ENCODE measurements at regions of chr1 and their contacts with region 1.

Region 1: GRCh38 chr1:8727809-8728213 is 89.6 kb downstream of the RERE start:
- DNase-seq: no peak
- H3K4me3 ChIP-seq: no peak overlapping the region
- H3K27ac ChIP-seq: no peak overlapping the region
- H3K4me1 ChIP-seq: no peaks in the 10 kb centered on the region
- H3K27me3 ChIP-seq: no peaks in the 10 kb centered on the region
- CTCF ChIP-seq: no peak
- POLR2A ChIP-seq: no peak

Region 2: DNA sequence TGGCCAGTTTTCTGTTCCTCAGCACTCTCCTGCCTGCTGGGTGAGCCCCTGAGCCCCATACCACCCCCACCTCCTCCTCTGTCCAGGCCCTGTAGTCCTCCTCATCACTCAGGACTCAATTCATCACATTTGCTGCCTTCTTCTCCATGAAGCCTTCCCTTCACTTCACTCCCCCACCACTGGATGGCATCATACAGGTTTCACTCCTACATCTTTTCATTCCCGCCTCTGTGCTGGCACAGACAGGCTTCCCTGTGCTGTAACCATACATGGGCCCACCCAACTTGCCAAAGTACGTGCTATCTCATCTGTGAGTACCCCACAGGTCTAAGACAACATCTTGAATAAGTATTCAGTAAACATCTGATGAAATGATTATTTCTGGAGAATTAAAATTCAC is 353.0 kb before region 1 on chr1:
- CTCF ChIA-PET with region 1: interaction called, 9 read pairs
- POLR2A ChIA-PET with region 1: no interaction called
- dilution Hi-C with region 1: no loop called
- intact Hi-C with region 1: loop called (anchors 2 kb)
- DNase-seq: peak; percentile 55
- H3K4me3 ChIP-seq: no peak overlapping the region
- H3K27ac ChIP-seq: no peak overlapping the region
- H3K4me1 ChIP-seq: peaks cover 24% of the 10 kb centered on the region
- H3K27me3 ChIP-seq: no peaks in the 10 kb centered on the region
- CTCF ChIP-seq: peak; percentile 28 to 47
- POLR2A ChIP-seq: no peak

Region 3: GRCh38 chr1:8560611-8561544 is 166.9 kb before region 1 on chr1:
- CTCF ChIA-PET with region 1: interaction called, 78 read pairs
- POLR2A ChIA-PET with region 1: no interaction called
- dilution Hi-C with region 1: no loop called
- intact Hi-C with region 1: loop called (anchors 1 kb)
- DNase-seq: peak; percentile 64
- H3K4me3 ChIP-seq: no peak overlapping the region
- H3K27ac ChIP-seq: no peak overlapping the region
- H3K4me1 ChIP-seq: peaks cover 2% of the 10 kb centered on the region
- H3K27me3 ChIP-seq: no peaks in the 10 kb centered on the region
- CTCF ChIP-seq: peak; percentile 58 to 66
- POLR2A ChIP-seq: no peak

Region 4: GRCh38 chr1:8687039-8687438 is 40.8 kb before region 1 on chr1:
- CTCF ChIA-PET with region 1: interaction called, 7 read pairs
- POLR2A ChIA-PET with region 1: no interaction called
- dilution Hi-C with region 1: no loop called
- intact Hi-C with region 1: loop called (anchors 1 kb)
- DNase-seq: peak; percentile 95
- H3K4me3 ChIP-seq: no peak overlapping the region
- H3K27ac ChIP-seq: peak overlapping the region; percentile 74
- H3K4me1 ChIP-seq: peaks cover 19% of the 10 kb centered on the region
- H3K27me3 ChIP-seq: no peaks in the 10 kb centered on the region
- CTCF ChIP-seq: no peak
- POLR2A ChIP-seq: no peak

Region 5: GRCh38 chr1:8702850-8703810 is 24.7 kb before region 1 on chr1:
- CTCF ChIA-PET with region 1: interaction called, 39 read pairs
- POLR2A ChIA-PET with region 1: no interaction called
- dilution Hi-C with region 1: no loop called
- intact Hi-C with region 1: loop called (anchors 1 kb)
- DNase-seq: peak; percentile 96
- H3K4me3 ChIP-seq: peak overlapping the region; percentile 61 to 94 (median 80)
- H3K27ac ChIP-seq: peak overlapping the region; percentile 77
- H3K4me1 ChIP-seq: peaks cover 17% of the 10 kb centered on the region
- H3K27me3 ChIP-seq: no peaks in the 10 kb centered on the region
- CTCF ChIP-seq: peak in 1 of 2 donors; percentile 20
- POLR2A ChIP-seq: peak; percentile 95

Region 6: DNA sequence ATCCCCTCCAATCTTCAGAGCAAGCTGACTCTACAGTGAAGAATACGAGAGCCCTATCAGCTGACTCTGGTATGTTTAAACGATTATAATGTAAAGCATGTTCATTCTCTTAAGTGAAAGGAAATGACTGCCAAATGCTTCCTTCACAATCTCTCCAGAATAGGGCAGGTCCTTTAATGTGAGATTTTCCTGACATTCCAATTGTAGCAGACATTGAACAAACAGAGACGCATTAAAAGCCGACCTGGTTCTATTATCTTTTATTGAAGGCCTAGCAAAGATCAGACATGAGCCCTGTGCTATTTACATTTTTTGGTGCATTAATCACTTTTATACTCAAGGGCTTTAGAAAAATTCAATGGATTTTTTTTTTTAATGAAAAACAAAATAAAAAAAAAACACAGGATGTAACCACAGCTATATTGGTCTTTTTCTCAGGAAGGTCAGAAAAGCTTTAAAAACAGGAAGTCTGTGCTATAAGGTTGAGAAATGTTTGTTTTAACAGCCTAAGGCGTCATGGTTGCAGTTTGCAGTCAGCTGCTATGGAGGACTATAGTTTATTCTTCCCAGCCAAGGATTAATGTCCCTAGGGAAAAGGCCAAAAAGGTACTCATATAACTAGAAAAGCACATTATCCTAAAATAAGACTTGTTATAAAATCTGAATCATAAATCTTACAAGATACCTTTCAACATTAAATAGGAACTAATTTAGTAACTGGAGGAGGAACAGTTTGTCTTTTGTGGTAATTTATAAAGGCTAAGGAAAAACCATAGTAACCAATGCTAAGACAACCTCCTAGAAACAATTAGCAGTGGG is 15.2 kb before region 1 on chr1:
- CTCF ChIA-PET with region 1: interaction called, 12 read pairs
- POLR2A ChIA-PET with region 1: interaction called, 3 read pairs
- dilution Hi-C with region 1: no loop called
- intact Hi-C with region 1: no loop called
- DNase-seq: peak; percentile 96
- H3K4me3 ChIP-seq: peak overlapping the region in 1 of 3 experiments; percentile 30
- H3K27ac ChIP-seq: peak overlapping the region; percentile 94
- H3K4me1 ChIP-seq: peaks cover 33% of the 10 kb centered on the region
- H3K27me3 ChIP-seq: no peaks in the 10 kb centered on the region
- CTCF ChIP-seq: no peak
- POLR2A ChIP-seq: no peak

Region 7: DNA sequence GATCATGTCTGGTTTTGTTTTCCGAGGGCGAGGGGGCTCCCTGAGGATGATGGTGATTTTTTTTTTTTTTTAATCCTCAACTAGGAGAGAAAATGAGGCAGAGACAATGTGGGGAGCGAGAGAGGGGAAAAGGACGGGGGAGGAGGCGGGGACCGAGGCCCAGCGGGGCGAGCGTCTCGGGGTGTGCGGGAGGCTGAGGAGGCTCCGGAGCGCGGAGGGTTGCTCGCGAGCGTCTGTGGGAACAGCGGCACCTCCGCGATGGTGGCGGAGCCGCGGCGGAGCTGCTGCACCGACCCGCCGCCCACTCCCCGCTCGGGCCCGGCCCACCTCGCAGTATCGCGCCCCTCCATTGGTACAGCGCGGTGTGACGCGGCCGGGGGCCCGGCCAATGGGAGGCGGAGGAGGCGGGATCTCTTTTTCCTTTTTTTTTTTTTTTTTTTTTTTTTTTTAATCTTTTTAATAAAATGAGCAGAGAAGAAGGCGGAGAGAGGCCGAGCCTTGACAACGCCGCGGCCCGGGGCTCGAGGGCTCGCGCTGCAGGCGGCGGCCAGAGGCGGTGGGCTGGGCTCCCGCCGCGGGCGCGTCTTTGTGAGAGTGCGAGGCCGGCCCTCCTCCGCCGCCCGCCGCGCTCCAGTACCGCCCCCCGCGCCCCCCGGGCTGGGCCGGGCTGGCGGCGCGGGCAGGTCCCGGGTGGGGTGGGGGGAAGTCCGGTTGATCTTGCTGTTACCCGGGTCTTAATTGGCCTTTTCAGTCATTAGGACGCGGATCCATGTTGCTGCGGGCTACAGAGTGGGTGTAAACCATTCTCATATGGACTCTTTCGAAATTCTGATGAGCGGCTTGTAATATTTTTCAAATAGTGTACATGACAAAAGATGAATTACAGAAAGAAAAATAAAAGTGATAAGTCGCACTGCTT is 89.9 kb after region 1 on chr1 and contains the start of gene RERE:
- CTCF ChIA-PET with region 1: interaction called, 12 read pairs
- POLR2A ChIA-PET with region 1: no interaction called
- dilution Hi-C with region 1: no loop called
- intact Hi-C with region 1: no loop called
- DNase-seq: peak; percentile 95
- H3K4me3 ChIP-seq: peak within 1 kb of the TSS; percentile 84 to 98 (median 91)
- H3K27ac ChIP-seq: peak within 1 kb of the TSS; percentile 92
- H3K4me1 ChIP-seq: peaks cover 60% of the 10 kb centered on the region
- H3K27me3 ChIP-seq: no peaks in the 10 kb centered on the region
- CTCF ChIP-seq: no peak
- POLR2A ChIP-seq: peak; percentile 91
- total RNA-seq, gene RERE: 110 and 113 TPM in 2 replicates

Region 8: GRCh38 chr1:8962812-8963530 is 235.2 kb after region 1 on chr1:
- CTCF ChIA-PET with region 1: no interaction called
- POLR2A ChIA-PET with region 1: no interaction called
- dilution Hi-C with region 1: no loop called
- intact Hi-C with region 1: no loop called
- DNase-seq: peak; percentile 40
- H3K4me3 ChIP-seq: no peak overlapping the region
- H3K27ac ChIP-seq: no peak overlapping the region
- H3K4me1 ChIP-seq: peaks cover 3% of the 10 kb centered on the region
- H3K27me3 ChIP-seq: no peaks in the 10 kb centered on the region
- CTCF ChIP-seq: peak; percentile 50 to 62
- POLR2A ChIP-seq: no peak

Measured in endothelial cell of umbilical vein (primary cell).